ENCODE measurements at regions of chr14 and their contacts with region 1.

Region 1: DNA sequence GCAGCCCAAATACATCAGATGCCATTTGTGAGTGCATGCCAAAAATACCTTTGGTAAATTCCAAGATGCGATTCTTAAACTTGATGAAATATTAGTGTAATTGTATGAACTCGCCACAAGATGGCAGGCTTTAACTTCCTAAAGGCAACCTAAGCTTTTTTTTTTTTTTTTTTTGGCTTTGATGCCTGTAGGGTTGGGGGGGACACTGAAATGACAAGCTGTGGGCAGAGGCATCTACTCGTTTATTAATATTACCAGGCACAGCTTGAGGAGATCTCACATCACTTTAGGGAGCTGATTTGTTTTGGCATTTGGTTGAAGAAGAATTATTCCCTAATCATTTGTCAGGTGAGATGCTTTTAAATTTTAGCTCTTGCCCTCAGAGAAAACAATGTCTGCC is 126.7 kb upstream of the CCDC196 start:
- DNase-seq: no peak
- H3K4me3 Mint-ChIP-seq: no peak overlapping the region
- H3K27ac Mint-ChIP-seq: no peak overlapping the region
- H3K4me1 Mint-ChIP-seq: no peaks in the 10 kb centered on the region
- H3K27me3 Mint-ChIP-seq: peaks cover 21% of the 10 kb centered on the region

Region 2: GRCh38 chr14:66403183-66403582 is 43.7 kb after region 1 on chr14:
- intact Hi-C with region 1: loop called (anchors 5 kb)
- DNase-seq: no peak
- H3K4me3 Mint-ChIP-seq: no peak overlapping the region
- H3K27ac Mint-ChIP-seq: no peak overlapping the region
- H3K4me1 Mint-ChIP-seq: peaks cover 2% of the 10 kb centered on the region
- H3K27me3 Mint-ChIP-seq: no peaks in the 10 kb centered on the region

Measured in activated T-helper 2 cell treated with anti-CD3 and anti-CD28 coated beads, Interferon-gamma antibody, Interleukin-2, Interleukin-4, amounts not matched to agents 10 μg/mL and 5 μg/mL and 100 μg/mL, durations not matched to agents 14 hours and 24 hours and 36 hours (primary cell).